Ascending aorta (tissue), 2 donors: ENCODE measurements at regions of chr5 and their contacts with region 1.

Region 1: DNA sequence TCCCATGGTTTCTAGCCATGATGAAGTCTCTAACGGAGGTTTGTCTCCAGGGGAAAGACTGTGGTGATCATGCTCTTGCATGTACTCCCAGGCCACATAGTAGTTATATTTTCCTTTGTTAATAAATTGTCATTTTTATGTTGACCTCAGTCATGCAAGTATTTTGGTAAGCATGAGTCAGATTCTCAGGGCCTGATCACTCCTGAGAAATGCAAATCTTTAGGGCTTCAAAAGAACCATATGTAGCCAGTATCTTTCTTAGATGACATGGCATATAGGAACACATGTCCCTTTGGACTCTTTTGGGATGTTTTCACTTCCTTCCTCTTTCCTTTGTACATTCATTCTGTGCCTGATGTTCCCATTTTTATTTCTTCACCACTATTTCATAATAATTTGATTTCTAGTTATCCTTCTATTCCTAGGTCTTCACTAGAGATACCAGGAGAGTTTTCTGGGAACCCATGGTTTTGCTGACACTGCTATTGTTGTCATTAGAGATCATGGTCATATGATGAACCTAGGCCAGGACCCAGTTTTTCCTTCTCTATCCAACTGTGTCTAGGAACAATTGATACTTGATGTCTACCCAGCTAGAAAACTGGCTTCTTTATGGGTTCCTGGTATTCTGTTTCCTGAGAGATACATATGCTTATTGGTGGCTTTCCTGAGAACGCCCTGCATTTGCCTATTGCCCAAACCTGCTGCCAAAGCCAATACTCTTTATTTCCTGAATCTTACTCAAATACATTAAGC is 248.1 kb upstream of the NREP start:
- DNase-seq: no peak
- H3K4me3 ChIP-seq: no peak overlapping the region
- H3K27ac ChIP-seq: peak overlapping the region; percentile 5 to 58
- H3K4me1 ChIP-seq: peaks cover 0 to 4% of the 10 kb centered on the region in 2 donors
- H3K27me3 ChIP-seq: no peaks in the 10 kb centered on the region
- CTCF ChIP-seq: no peak

Region 2: DNA sequence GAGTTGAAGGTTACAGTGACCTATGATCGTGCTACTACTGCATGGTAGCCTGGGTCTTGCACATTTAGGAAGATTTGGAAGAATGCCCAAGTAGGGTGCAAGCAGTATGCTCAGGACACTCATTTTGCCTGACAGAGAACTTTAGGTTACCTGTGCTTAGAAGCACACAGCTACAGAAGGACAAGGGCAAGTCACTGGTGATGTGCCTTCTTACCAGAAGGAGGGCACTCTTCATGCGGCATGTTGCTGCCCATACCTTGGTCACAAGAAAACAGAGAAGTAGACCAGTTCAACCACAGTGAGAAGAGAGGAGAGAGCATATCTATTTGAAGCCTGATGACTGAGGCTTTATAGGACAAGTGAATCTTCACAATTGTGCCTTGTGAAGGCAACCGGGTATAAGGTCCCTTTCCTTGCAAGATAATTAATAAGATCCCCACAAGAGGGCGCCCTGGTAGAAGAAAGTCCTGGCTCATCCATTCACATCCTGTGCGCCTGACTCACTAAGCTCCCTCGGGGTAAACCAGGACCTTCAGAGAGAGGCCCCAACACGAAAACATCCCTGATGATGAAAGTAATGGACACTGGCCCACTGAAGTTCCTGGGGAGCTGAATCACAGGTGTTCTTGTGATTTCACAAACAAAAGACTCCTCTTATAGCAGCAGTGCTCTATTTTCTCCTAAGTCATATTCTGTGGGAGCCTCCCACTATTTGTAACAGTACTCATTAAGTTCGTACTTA is 454.6 kb before region 1 on chr5:
- intact Hi-C with region 1: loop called (anchors 10 kb)
- DNase-seq: peak; percentile 48 to 95
- H3K4me3 ChIP-seq: no peak overlapping the region
- H3K27ac ChIP-seq: no peak overlapping the region
- H3K4me1 ChIP-seq: peaks cover 0 to 4% of the 10 kb centered on the region in 2 donors
- H3K27me3 ChIP-seq: no peaks in the 10 kb centered on the region
- CTCF ChIP-seq: peak; percentile 53 to 76 (median 75)